ENCODE measurements at regions of chr2 and their contacts with region 1.

Region 1: DNA sequence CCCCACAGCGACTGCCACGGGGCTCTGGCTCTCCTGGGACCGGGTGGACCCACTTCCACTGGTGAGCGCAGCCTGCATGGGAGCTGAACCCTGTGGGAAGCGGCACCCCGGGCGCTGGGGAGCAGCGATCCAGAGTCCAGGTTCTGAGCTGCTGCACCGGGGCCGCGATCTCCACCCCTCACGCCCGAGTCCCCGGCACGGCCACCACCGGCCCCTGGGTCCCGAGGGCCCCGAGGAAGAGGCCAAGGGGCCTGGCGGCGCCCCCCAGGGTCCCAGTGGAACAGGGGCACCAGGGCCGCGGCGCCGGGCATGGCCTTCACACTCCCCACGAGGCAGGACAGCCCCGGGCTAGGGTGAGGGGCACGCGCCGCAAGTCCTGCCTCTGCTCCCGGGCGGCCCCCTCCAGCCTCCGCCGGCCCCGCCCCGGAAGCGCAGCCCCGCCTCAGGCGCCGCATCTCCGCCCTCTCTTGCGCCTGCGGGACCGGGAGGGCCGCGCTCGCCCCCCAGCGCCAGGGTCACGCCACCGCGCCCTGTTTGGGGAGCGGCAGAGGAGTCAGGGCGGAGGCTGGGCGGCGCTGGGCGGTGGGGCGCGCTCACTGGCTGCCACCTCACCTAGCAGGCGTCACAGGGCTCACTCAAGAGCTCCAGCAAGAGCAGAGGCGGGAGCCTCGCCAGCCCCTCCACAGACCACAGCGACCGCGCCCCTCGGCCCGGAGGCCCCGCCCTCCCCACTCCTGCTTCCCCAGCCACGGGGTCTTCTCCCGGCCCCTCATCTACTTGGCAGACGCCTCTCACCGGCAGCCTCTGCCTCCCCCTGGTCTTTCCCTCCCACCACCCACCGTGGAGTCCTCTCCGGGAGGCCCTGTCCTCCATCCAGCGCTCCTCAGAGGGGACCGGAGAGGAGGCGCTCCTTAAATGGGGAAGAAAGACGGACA is 26.8 kb downstream of the THAP4 start:
- DNase-seq: peak; percentile 80 to 96
- H3K4me3 ChIP-seq: peak overlapping the region; percentile 38 to 66 (median 60)
- H3K27ac ChIP-seq: peak overlapping the region; percentile 73; the same call in 1 of the 2 replicates
- H3K4me1 ChIP-seq: no peaks in the 10 kb centered on the region
- H3K27me3 ChIP-seq: no peaks in the 10 kb centered on the region
- CTCF ChIP-seq: peak; percentile 72 to 81 (median 79)
- EP300 ChIP-seq: peak in 1 of 2 experiments; percentile 89; a peak in 1 of 3 replicates
- POLR2A ChIP-seq: peak; percentile 43 to 62; a peak in 2 of 3 replicates
- RAD21 ChIP-seq: peak; percentile 57 to 72

Region 2: DNA sequence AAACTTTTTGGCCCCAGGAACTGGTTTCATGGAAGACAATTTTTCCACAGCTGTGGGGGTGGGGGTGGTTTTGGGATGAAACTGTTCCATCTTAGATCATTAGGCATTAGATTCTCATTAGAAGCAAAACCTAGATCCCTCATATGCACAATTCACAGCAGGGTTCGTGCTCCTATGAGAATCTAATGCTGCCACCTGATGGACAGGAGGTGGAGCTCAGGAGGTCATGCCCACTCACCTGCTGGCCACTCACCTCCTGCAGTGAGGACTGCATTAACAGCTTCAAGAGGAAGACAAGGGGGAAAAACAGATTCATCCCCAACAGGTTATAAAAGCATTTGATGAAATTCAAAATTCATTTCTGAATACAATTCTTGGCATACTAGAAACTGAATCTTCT is 11.6 kb before region 1 on chr2:
- CTCF ChIA-PET with region 1: interaction called, 18 read pairs
- POLR2A ChIA-PET with region 1: interaction called, 4 read pairs
- DNase-seq: no peak
- H3K4me3 ChIP-seq: no peak overlapping the region
- H3K27ac ChIP-seq: no peak overlapping the region
- H3K4me1 ChIP-seq: no peaks in the 10 kb centered on the region
- H3K27me3 ChIP-seq: no peaks in the 10 kb centered on the region
- CTCF ChIP-seq: peak; percentile 50 to 58 (median 50)
- EP300 ChIP-seq: no peak
- POLR2A ChIP-seq: no peak
- RAD21 ChIP-seq: peak; percentile 70 to 71

Measured in H1 (cell line).